Dorsolateral prefrontal cortex (tissue), 120 donors: ENCODE measurements at regions of chr11 and their contacts with region 1.

Region 1: DNA sequence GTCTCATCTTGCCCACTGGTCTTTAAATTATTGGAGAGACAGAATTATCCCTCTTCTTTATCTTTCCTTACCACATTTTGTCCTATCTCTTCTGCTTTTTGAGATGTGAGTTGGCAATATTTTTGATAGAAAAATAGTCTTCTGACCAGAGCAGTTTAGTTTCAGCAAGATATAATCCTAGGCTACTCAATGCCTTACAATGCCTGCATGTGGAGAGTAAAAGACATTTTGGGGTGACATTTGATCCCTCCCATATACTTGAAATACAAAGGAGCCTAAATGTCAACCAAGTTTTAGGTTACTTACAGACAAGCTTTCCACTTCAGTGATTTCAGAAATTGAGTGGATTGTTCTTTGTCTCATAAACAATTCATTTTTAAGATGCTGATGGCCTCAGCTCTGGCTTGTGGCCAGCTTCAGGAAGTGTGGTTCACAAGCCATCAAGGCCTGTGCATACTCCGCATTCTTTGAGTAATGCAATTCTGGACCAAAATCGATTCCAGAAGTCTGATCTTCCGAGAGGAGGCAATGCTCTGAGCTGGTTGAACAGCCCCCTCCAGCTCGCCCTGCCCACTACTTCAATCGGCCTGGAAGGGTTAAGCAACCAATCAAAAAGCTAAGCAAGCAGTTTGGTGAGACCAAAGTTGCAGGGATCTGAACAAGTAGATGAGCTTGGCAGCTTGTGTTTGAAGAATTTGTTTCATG is 274.4 kb downstream of the BLID start:
- DNase-seq: no peak
- H3K4me3 ChIP-seq: no peak overlapping the region
- H3K27ac ChIP-seq: no peak overlapping the region
- H3K27me3 ChIP-seq: no peaks in the 10 kb centered on the region
- CTCF ChIP-seq: no peak

Region 2: DNA sequence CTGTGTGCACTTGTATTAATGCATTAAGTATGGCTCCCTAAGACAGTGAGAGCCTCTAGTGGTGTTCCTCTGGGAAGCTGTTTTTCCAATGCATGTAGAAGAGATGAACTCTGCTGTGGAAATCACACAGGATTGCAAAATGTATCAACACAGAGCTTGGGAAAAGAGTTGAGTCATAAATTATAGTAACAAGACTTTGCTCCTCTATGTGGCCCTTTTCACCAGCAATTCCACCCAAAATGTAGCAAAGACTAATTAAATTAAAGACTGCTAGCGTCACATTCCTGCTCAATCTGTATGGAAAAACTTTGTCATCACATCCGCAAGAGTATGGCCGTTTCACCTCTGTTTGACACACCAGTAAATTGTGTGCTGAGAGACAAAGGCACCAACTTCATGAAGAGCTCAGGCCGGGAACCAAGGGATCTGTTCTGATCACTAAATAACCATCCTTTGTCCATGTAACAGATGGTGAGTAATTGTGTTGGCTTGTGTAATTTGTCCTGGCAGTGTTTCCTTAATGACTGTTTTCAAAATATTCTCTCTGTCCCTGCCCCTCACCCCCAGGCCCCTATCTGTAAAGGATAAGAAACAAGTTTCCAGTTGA is 179.7 kb before region 1 on chr11:
- intact Hi-C with region 1: loop called in 1 of 2 experiments (anchors 10 kb)
- DNase-seq: no peak
- H3K4me3 ChIP-seq: no peak overlapping the region
- H3K27ac ChIP-seq: peak overlapping the region in 5 of 59 donors; percentile 7 to 31 (median 18)
- H3K27me3 ChIP-seq: no peaks in the 10 kb centered on the region
- CTCF ChIP-seq: no peak

Region 3: GRCh38 chr11:121795174-121795573 is 46.5 kb before region 1 on chr11:
- intact Hi-C with region 1: loop called in 1 of 2 experiments (anchors 10 kb)
- DNase-seq: peak in 4 of 10 donors; percentile 41 to 54 (median 42)
- H3K4me3 ChIP-seq: peak overlapping the region in 55 of 59 donors; percentile 3 to 66 (median 41)
- H3K27ac ChIP-seq: peak overlapping the region in 53 of 59 donors; percentile 1 to 91 (median 73)
- H3K27me3 ChIP-seq: no peaks in the 10 kb centered on the region
- CTCF ChIP-seq: no peak

Region 4: DNA sequence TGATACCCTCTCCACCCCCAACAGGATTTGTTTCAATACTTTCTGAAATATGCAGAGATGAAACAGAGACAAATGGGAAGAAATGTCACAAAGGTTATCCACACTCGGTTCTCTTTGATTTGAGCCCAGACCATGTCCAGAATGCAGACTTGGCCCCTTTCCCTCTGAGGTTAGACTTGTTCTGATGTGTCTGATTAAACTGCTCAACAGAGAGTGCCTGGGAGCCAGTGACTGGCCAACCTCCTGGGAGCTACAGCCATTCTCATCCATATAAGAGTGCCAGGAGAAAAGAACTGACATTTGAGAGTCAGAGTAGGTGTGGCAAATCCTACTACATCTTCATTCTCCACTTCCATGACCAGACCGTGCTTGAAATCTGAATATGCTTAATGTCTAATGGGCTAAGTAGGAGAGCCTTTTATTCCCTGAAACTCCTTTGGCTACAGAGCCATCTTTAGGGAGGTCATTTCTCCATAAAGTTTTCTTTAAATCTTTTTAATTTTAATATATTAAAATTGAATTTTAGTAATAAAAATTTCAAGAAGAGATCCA is 72.9 kb after region 1 on chr11:
- intact Hi-C with region 1: no loop called
- DNase-seq: no peak
- H3K4me3 ChIP-seq: no peak overlapping the region
- H3K27ac ChIP-seq: no peak overlapping the region
- H3K27me3 ChIP-seq: no peaks in the 10 kb centered on the region
- CTCF ChIP-seq: no peak